ENCODE measurements at regions of chr20 and their contacts with region 1.

Region 1: DNA sequence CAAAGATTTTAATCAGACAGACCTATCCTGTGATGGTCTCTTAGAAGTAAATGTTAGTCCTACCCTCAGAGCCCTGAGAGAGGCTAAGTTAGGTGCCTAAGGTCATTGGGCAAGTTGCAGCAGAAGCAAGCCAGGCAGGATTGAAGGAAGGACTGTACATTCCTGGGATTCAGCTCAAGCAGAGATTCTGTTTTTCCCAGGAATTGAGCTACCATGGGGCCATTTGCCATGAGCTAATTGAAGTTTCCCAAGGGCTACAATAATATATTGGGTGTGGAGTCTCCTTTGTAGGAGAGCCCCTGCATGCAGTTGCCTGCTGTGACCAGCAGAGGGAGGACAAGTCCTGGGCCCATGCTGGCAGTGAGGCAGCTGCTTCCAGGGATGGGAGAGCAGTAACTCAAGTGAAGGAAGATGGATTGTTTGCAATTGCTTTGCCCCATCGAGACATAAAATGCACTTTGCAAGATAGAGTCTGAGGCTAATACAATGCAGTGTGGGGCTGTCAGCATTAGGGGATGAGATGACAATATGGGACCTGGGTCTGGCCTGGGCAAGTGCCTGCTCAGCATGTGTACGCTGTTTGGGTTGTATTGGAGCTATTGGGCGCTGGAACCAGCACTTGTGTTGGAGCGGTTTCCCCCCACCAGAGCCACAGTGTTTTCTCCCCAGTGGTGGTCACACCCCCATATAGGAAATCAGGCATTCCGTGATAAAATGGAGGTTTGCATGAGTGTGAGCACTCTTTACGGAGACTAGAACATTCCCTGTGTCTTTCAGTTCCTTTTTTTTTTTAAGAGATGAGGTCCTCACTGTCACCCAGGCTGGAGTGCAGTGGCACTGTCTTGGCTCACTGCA is 27.9 kb downstream of the DNMT3B start:
- DNase-seq: peak; percentile 92
- H3K4me3 Mint-ChIP-seq: no peak overlapping the region
- H3K27ac Mint-ChIP-seq: no peak overlapping the region
- H3K4me1 Mint-ChIP-seq: peaks cover 24% of the 10 kb centered on the region
- H3K27me3 Mint-ChIP-seq: no peaks in the 10 kb centered on the region

Region 2: DNA sequence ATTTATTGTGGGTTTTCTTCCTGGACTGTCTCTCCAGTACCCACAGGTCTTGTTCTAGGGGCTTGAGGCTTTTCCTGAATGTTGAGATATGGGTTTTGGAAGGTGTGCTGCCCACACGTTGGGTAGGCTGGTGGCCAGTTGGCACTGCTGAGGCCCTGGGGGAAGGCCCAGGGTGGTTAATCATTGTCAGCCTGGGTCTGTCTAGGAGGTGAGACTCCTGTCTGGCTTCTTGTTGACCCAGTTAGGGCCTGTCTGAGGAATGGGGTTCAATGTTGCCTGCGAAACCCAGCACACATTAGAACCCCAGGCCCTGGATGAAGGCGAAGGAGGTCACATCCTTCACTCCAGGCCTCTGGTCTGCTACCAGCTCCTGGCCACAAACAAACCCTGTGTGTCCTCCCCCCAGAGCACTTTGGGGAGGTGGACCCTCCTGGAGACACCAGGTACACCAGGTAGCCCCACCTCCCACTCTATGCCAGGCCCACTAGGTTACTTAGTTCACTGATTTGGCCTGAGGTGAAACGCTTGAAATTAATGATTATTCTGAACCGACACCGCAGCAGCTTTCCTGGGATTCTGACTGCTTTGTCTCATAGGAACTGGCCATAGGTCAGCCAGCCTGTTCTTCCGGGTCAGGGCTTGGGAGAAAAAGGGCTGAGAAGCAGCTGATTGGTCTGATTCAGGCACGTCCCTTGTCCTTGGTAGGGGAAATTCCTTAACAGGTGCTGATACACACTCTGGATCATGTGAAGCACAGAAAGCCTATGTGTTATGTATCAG is 12.8 kb before region 1 on chr20:
- intact Hi-C with region 1: no loop called
- DNase-seq: no peak
- H3K4me3 Mint-ChIP-seq: no peak overlapping the region
- H3K27ac Mint-ChIP-seq: no peak overlapping the region
- H3K4me1 Mint-ChIP-seq: peaks cover 5% of the 10 kb centered on the region
- H3K27me3 Mint-ChIP-seq: no peaks in the 10 kb centered on the region

Region 3: DNA sequence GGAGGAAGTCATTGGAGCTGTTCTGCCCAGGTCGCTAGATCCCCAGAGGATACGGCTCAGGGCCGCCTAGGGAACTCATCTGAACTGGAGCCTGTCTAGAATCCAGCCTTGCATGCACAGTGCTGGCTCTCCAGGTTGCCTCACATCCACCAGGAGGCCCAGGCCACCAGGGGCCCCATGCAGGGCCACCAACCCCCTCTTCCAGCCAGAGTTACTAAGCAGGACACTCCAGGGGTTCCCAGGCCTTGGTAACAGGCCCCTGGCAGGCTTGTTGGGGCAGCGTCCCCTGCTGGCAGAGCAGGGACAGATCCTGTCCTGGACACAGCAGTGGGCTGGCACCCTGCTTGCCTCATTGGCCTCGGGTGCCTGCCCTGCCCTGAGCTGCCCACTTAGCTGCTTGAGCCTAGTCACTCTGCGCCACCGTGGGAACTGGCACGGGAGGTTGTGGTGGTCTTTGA is 103.9 kb after region 1 on chr20:
- intact Hi-C with region 1: loop called (anchors 10 kb)
- DNase-seq: peak; percentile 67
- H3K4me3 Mint-ChIP-seq: no peak overlapping the region
- H3K27ac Mint-ChIP-seq: no peak overlapping the region
- H3K4me1 Mint-ChIP-seq: peaks cover 5% of the 10 kb centered on the region
- H3K27me3 Mint-ChIP-seq: no peaks in the 10 kb centered on the region

Region 4: DNA sequence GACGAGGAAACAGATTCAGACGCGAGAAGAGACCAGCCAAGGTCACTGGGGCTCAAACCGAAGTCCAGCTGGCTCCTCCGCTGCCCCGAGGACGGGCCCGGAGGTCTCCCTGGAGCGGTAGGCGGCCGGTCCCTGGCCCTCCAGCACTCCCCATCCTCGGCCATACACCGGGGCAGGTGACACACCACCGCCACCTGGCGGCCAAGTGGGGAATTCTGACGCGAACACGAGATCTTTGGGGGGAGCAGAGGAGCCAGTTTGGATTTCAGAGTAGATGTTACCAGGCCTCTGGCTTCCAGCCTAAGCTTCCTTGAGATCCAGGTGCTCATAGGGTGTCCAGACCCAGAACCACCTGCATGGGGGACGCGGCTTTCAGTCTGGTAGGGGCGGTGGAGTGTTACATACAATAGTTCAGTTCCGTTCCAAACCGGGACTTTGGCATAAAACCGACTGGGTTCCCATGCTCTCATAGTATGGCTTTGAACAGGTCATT is 509.0 kb after region 1 on chr20:
- intact Hi-C with region 1: loop called (anchors 1 kb)
- DNase-seq: peak; percentile 92
- H3K4me3 Mint-ChIP-seq: no peak overlapping the region
- H3K27ac Mint-ChIP-seq: no peak overlapping the region
- H3K4me1 Mint-ChIP-seq: peaks cover 2% of the 10 kb centered on the region
- H3K27me3 Mint-ChIP-seq: peaks cover 13% of the 10 kb centered on the region